Right ventricle myocardium inferior (tissue), 1 donor: ENCODE measurements at regions of chr1 and their contacts with region 1.

Region 1: GRCh38 chr1:35202048-35202719 is 9.2 kb upstream of the SFPQ start:
- DNase-seq: no peak
- ATAC-seq: peak; percentile 92

Region 2: GRCh38 chr1:35298464-35298863 is 96.3 kb after region 1 on chr1:
- intact Hi-C with region 1: loop called (anchors 5 kb)
- DNase-seq: no peak
- ATAC-seq: peak; percentile 61

Region 3: GRCh38 chr1:35386959-35387358 is 184.8 kb after region 1 on chr1:
- intact Hi-C with region 1: loop called (anchors 5 kb)
- DNase-seq: no peak
- ATAC-seq: no peak